ENCODE measurements at regions of chr4 and their contacts with region 1.

Region 1: GRCh38 chr4:2262143-2262943 is 434 bp upstream of the MXD4 start:
- DNase-seq: peak; percentile 98
- H3K4me3 Mint-ChIP-seq: peak overlapping the region; percentile 72
- H3K27ac Mint-ChIP-seq: peak overlapping the region; percentile 67
- H3K4me1 Mint-ChIP-seq: no peaks in the 10 kb centered on the region
- H3K27me3 Mint-ChIP-seq: no peaks in the 10 kb centered on the region

Region 2: DNA sequence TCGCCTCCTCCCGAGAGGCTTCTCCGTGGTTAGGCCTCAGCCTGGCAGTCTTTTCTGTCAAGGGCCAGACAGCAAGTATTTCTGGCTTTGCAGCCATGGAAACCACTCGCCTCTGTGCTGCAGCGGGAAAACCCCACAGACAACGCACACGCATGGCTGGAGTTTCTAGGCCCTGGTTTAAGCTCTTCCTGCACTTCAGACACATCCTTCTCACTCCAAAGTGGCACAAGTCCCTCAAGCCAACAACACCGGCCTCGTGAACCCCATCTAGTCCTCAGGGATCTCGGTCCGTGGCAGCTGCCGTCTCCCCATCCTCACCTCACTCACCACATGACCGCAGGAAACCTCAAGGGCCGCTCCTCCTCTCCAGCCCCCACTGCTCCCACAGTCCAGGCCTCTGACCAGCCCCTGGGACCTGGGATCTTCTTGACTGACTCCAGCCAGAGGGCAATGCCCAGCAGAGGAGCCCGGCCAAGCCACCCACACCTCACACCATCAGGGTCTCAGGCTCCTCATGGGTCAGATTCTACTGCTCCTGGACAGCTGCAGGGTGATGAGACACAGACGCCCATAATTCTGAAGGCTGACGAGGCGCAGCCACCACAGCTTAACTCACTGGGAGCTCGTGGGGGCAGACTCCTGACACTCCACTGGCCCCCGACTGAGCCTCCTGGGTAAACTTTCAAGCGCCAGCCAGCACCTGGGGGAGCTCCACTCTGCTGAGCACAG is 428.1 kb before region 1 on chr4:
- intact Hi-C with region 1: no loop called
- DNase-seq: no peak
- H3K4me3 Mint-ChIP-seq: no peak overlapping the region
- H3K27ac Mint-ChIP-seq: peak overlapping the region; percentile 75
- H3K4me1 Mint-ChIP-seq: peaks cover 15% of the 10 kb centered on the region
- H3K27me3 Mint-ChIP-seq: no peaks in the 10 kb centered on the region

Region 3: DNA sequence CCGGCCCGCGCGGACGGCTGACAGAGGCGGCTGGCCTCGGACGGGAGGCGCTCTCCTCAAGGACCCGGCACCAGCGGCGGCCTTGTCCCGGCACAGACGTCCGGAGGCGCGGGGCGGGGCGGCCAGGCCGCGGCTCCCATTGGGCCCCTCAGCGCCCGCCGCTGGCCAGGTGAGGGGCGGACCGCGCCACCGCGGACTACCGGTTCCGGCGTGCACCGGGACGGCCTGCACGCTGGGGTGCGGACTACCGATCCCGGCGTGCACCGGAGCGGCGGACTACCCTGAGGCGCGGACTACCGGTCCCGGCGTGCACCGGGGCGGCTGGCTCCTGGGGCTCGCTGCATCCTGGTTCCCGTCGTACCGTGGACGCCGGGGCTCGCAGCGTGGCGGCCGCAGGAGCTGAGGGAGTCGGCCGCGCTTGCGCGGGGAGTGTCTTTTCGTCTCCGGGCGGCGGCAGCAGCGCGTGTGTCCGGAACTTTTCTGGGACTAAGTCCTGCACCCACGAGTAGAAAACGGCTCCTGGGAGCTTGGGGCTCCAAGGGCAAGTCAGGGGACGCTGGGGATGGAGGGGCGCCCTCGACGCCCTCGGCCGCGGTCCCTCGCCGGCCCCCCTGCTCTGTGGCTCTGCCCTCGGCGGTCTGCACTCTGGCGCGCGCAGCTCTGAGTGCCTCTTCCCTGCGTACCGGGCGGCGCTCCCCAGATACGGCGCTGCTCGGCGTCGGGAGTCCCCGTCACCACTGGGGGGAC is 406.1 kb before region 1 on chr4 and contains the start of gene LETM1:
- intact Hi-C with region 1: loop called (anchors 1 kb)
- DNase-seq: peak; percentile 95
- H3K4me3 Mint-ChIP-seq: peak within 1 kb of the TSS; percentile 87
- H3K27ac Mint-ChIP-seq: peak within 1 kb of the TSS; percentile 68
- H3K4me1 Mint-ChIP-seq: peaks cover 34% of the 10 kb centered on the region
- H3K27me3 Mint-ChIP-seq: no peaks in the 10 kb centered on the region
- total RNA-seq, gene LETM1: 93.9 and 101 TPM in 2 replicates

Region 4: GRCh38 chr4:2041234-2042130 is 220.9 kb before region 1 on chr4:
- intact Hi-C with region 1: loop called (anchors 1 kb)
- DNase-seq: peak; percentile 87
- H3K4me3 Mint-ChIP-seq: peak overlapping the region; percentile 84
- H3K27ac Mint-ChIP-seq: no peak overlapping the region
- H3K4me1 Mint-ChIP-seq: peaks cover 7% of the 10 kb centered on the region
- H3K27me3 Mint-ChIP-seq: peaks cover 31% of the 10 kb centered on the region

Region 5: DNA sequence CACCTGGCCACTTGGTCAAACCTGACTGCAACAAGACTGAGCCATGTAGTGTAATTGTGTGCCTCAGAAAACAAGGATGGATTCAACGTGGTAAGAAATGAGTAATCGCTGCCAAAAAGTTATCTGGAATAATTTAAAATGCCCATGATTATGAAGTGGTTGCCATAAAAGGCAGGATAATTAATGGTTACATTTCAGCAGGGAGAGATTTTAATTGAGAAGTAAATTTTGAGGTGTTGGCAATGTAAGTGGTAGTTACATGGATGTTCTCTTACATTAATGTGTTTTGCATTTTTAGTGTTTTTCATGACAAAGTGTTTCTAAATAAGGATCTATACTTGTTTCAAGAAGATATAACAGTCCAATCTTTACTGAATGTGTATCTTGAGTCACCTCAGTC is 36.1 kb before region 1 on chr4:
- intact Hi-C with region 1: no loop called
- DNase-seq: no peak
- H3K4me3 Mint-ChIP-seq: no peak overlapping the region
- H3K27ac Mint-ChIP-seq: no peak overlapping the region
- H3K4me1 Mint-ChIP-seq: peaks cover 5% of the 10 kb centered on the region
- H3K27me3 Mint-ChIP-seq: no peaks in the 10 kb centered on the region

Region 6: GRCh38 chr4:2281575-2282343 is 19.4 kb after region 1 on chr4:
- intact Hi-C with region 1: loop called (anchors 2 kb)
- DNase-seq: peak; percentile 74
- H3K4me3 Mint-ChIP-seq: peak overlapping the region; percentile 45
- H3K27ac Mint-ChIP-seq: peak overlapping the region; percentile 90
- H3K4me1 Mint-ChIP-seq: peaks cover 30% of the 10 kb centered on the region
- H3K27me3 Mint-ChIP-seq: no peaks in the 10 kb centered on the region

Region 7: DNA sequence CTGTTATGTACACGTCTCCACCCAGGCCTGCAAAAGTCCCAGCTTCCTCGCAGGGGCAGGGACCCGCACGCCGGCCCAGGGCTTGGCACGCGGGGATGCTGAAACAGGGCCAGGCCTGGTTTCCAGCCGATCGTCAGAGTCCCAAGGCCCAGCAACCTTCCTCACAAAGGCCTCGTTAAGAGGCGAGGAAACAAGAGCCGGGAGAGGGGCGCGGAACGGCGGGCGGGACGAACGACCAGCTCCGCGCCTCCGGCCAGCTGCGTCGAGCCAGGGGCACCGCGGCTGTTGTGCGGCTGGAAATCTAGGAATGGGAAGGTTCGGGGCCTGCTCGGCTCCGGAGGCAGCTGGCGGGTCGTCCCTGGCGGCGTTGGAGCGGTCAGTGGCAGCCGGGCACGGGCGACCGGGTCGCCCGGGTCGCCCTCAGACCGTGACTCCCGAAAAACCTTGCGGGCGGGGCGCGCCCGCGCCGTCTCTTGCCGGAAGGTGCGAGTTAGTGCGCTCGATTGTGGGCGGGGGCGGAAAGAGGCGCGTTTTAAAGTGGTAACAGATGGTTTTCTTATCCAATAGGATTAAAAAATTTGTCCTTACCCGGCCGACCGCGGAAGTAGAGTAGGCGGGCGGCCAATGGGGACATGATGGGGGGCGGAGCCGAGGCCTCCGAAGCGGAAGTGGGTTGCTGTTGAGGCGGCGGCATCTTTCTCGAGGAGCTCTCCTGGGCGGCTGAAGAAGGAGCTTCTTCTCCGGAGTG is 206.3 kb after region 1 on chr4 and contains the start of gene RNF4:
- intact Hi-C with region 1: loop called (anchors 1 kb)
- DNase-seq: peak; percentile 94
- H3K4me3 Mint-ChIP-seq: peak within 1 kb of the TSS; percentile 95
- H3K27ac Mint-ChIP-seq: peak within 1 kb of the TSS; percentile 96
- H3K4me1 Mint-ChIP-seq: peaks cover 29% of the 10 kb centered on the region
- H3K27me3 Mint-ChIP-seq: peaks cover 1% of the 10 kb centered on the region
- total RNA-seq, gene RNF4: 93.7 and 112 TPM in 2 replicates